B cell (primary cell): ENCODE measurements at regions of chr10 and their contacts with region 1.

Region 1: DNA sequence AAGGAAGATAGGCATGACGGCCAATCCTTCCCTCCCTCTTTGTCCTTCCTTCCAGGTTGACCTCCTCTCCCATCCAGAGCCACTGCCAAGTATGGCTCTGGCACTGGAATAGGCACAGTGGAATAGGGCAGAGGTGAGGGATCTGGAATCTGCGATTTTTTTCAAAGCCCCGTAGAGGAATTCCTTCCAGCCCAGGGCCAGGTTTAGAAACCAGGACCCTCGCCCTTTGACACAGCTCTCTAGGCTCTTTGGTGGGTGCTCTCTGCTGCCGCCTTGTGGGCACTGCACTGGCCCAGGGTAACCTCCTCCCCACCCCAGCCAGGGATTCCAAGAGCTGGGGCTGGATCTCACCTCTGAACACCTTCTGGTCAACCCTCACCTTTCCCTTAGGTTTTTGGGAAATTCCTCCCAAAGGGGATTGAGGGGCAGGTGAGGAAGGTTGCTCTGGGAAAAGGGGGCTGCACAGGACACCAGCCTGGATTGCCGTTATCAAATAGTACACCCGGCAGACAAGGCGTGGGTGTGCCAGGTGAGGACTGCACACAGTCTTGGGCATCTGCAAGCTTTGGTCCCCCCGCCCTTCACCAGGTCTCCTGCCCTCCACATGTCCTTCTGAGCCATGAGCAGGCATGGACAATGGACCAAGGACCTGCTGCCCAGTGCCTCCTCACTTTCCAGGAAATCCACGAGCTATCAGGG is 22.8 kb downstream of the C10orf105 start:
- DNase-seq: peak; percentile 69
- ATAC-seq: no peak
- H3K4me3 ChIP-seq: no peak overlapping the region
- H3K4me3 Mint-ChIP-seq: no peak overlapping the region
- H3K27ac ChIP-seq: no peak overlapping the region
- H3K27ac Mint-ChIP-seq: peak overlapping the region; percentile 20
- H3K4me1 ChIP-seq: peaks cover 39 to 55% of the 10 kb centered on the region in 2 donors
- H3K4me1 Mint-ChIP-seq: peaks cover 53% of the 10 kb centered on the region
- H3K27me3 ChIP-seq: peaks cover 0 to 6% (median 0%) of the 10 kb centered on the region in 4 experiments
- H3K27me3 Mint-ChIP-seq: no peaks in the 10 kb centered on the region
- CTCF ChIP-seq: peak; percentile 84

Region 2: DNA sequence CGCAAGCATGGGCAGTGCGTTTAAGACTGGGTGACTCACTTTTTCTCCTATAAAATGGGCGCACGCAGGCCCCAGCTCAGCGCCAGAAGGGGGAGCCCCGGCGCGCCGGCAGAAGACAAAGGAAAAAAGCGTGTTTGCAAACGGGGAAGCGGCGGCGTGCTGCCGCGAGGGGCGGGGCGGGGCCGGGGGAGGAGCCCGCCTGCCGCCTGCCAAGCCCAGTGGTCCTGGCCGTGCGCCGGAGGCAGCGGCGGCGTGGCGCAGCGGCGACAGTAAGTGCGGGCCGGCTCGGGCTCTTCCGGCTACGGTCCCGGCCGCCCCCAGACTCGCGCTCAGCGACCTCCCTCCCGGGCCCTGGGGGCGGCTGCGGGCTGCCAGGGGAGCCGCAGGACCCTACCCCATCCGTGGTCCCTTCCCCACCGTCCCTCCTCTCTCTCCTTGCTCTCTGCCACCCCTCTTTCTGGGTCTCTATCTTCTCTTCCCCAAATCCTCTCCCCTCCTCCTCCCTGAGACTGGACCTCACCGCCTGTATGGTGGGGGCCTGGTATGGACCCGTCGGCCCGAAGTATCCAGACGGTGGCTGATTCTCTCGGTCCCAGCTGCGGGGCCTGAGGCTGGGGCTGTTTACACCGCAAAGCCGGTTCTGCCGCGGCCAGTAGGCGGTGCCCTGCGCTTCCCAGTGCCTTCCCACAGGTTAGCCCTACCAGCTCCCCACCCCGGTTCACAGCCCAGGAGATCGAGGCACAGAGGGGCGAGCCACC is 377.6 kb before region 1 on chr10 and contains the start of gene SLC29A3:
- CTCF ChIA-PET with region 1: interaction called, 91 read pairs
- POLR2A ChIA-PET with region 1: interaction called, 5 read pairs
- intact Hi-C with region 1: loop called (anchors 1 kb)
- DNase-seq: peak; percentile 88
- ATAC-seq: peak; percentile 90
- H3K4me3 ChIP-seq: peak within 1 kb of the TSS; percentile 34 to 84 (median 78)
- H3K4me3 Mint-ChIP-seq: peak within 1 kb of the TSS; percentile 99
- H3K27ac ChIP-seq: peak within 1 kb of the TSS in 1 of 2 donors; percentile 72
- H3K27ac Mint-ChIP-seq: peak within 1 kb of the TSS; percentile 94
- H3K4me1 ChIP-seq: peaks cover 8 to 18% of the 10 kb centered on the region in 2 donors
- H3K4me1 Mint-ChIP-seq: peaks cover 17% of the 10 kb centered on the region
- H3K27me3 ChIP-seq: no peaks in the 10 kb centered on the region
- H3K27me3 Mint-ChIP-seq: no peaks in the 10 kb centered on the region
- CTCF ChIP-seq: peak; percentile 71
- total RNA-seq, gene SLC29A3: 6.7 and 8.2 TPM in 2 replicates

Region 3: GRCh38 chr10:71647526-71648253 is 49.1 kb before region 1 on chr10:
- CTCF ChIA-PET with region 1: interaction called, 4 read pairs
- POLR2A ChIA-PET with region 1: no interaction called
- intact Hi-C with region 1: loop called (anchors 10 kb)
- DNase-seq: no peak
- ATAC-seq: no peak
- H3K4me3 ChIP-seq: no peak overlapping the region
- H3K4me3 Mint-ChIP-seq: no peak overlapping the region
- H3K27ac ChIP-seq: no peak overlapping the region
- H3K27ac Mint-ChIP-seq: no peak overlapping the region
- H3K4me1 ChIP-seq: peaks cover 13 to 35% of the 10 kb centered on the region in 2 donors
- H3K4me1 Mint-ChIP-seq: peaks cover 31% of the 10 kb centered on the region
- H3K27me3 ChIP-seq: no peaks in the 10 kb centered on the region
- H3K27me3 Mint-ChIP-seq: no peaks in the 10 kb centered on the region
- CTCF ChIP-seq: peak; percentile 30

Region 4: GRCh38 chr10:71685554-71686232 is 11.1 kb before region 1 on chr10:
- CTCF ChIA-PET with region 1: interaction called, 10 read pairs
- POLR2A ChIA-PET with region 1: no interaction called
- intact Hi-C with region 1: no loop called
- DNase-seq: no peak
- ATAC-seq: no peak
- H3K4me3 ChIP-seq: no peak overlapping the region
- H3K4me3 Mint-ChIP-seq: no peak overlapping the region
- H3K27ac ChIP-seq: no peak overlapping the region
- H3K27ac Mint-ChIP-seq: no peak overlapping the region
- H3K4me1 ChIP-seq: peaks cover 5 to 8% of the 10 kb centered on the region in 2 donors
- H3K4me1 Mint-ChIP-seq: peaks cover 8% of the 10 kb centered on the region
- H3K27me3 ChIP-seq: no peaks in the 10 kb centered on the region
- H3K27me3 Mint-ChIP-seq: peaks cover 9% of the 10 kb centered on the region
- CTCF ChIP-seq: no peak

Region 5: DNA sequence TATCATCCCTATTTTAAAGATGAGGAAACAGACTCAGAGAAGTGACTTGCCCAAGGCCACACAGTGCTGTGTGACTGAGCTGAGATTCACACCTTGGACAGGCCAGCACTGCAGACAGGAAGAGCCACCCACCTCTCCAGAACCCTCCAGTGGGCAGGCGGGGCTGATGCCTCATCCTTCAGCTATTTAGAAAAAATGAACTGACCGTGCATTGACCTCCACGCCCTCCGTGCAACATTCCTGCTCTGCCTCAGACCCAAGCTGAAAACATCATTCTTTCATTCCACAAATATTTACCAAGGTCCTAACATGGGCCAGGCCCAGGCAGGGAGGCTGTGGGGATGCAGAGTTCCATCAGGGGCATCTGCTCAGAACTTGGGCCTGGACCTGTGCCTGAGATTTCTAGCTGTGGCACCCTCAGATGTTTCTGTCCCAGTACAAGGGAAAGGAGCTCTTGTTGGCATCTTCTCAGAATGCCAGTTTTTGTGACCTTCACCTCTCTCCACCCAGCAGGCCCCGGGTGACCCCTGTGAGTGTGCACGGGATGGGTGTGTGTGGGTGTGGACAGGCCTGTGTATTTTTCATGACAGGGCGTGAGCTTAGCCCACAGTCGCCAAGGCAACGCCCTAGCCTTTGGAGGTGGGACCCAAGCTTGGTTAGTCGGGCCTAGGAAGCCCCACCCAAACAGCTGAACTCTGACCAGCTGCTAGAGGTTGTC is 70.1 kb after region 1 on chr10:
- CTCF ChIA-PET with region 1: interaction called, 34 read pairs
- POLR2A ChIA-PET with region 1: interaction called, 5 read pairs
- intact Hi-C with region 1: no loop called
- DNase-seq: peak; percentile 74
- ATAC-seq: peak; percentile 50
- H3K4me3 ChIP-seq: peak overlapping the region in 1 of 5 experiments; percentile 42
- H3K4me3 Mint-ChIP-seq: peak overlapping the region; percentile 84
- H3K27ac ChIP-seq: peak overlapping the region; percentile 88 to 95
- H3K27ac Mint-ChIP-seq: peak overlapping the region; percentile 99
- H3K4me1 ChIP-seq: peaks cover 54 to 93% of the 10 kb centered on the region in 2 donors
- H3K4me1 Mint-ChIP-seq: peaks cover 87% of the 10 kb centered on the region
- H3K27me3 ChIP-seq: no peaks in the 10 kb centered on the region
- H3K27me3 Mint-ChIP-seq: no peaks in the 10 kb centered on the region
- CTCF ChIP-seq: no peak

Region 6: DNA sequence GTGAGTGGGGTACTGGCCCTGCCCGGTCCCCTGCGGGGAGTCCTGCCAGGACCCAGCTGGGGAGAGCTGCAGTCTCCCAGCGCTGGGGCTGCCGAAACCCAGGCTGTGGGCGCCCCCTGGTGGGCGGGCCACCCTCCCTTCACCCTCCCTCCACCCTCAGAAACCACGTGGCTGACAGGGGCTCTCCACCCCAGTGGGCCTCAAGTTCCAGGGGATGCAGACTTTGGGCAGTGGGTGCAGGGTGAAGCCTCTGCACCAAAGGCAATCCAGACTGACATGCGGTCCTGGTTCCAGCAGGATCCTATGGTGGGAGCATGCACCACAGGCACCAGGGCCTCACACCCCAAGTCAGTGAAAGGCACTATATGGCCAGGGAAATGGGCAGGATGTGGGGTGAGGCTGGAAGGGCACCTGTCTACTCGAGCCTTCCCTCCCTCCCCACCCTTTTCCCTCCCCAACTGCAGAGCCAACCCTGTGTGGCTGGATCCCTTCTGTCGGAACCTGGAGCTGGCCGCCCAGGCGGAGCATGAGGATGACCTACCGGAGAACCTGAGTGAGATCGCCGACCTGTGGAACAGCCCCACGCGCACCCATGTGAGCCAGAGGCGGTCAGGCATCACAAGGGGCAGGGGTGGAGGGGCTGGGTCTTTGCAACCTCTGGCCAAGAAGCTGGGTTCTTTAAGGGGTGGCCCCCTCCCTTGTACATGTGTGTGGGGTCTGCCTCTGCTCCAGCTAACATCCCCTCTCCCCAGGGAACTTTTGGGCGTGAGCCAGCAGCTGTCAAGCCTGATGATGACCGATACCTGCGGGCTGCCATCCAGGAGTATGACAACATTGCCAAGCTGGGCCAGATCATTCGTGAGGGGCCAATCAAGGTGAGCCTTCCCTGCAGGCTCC is 115.5 kb after region 1 on chr10:
- CTCF ChIA-PET with region 1: interaction called, 15 read pairs
- POLR2A ChIA-PET with region 1: no interaction called
- intact Hi-C with region 1: no loop called
- DNase-seq: peak; percentile 85
- ATAC-seq: peak; percentile 93
- H3K4me3 ChIP-seq: no peak overlapping the region
- H3K4me3 Mint-ChIP-seq: no peak overlapping the region
- H3K27ac ChIP-seq: no peak overlapping the region
- H3K27ac Mint-ChIP-seq: no peak overlapping the region
- H3K4me1 ChIP-seq: peaks cover 5 to 11% of the 10 kb centered on the region in 2 donors
- H3K4me1 Mint-ChIP-seq: peaks cover 6% of the 10 kb centered on the region
- H3K27me3 ChIP-seq: no peaks in the 10 kb centered on the region
- H3K27me3 Mint-ChIP-seq: peaks cover 4% of the 10 kb centered on the region
- CTCF ChIP-seq: peak; percentile 84